Colonic mucosa (tissue), 4 donors: ENCODE measurements at regions of chr2 and their contacts with region 1.

Region 1: GRCh38 chr2:66574701-66575624 is 140.0 kb downstream of the MEIS1 start:
- DNase-seq: peak; percentile 67
- H3K4me3 ChIP-seq: peak overlapping the region; percentile 31
- H3K27ac ChIP-seq: peak overlapping the region; percentile 61
- H3K4me1 ChIP-seq: peaks cover 17% of the 10 kb centered on the region
- H3K27me3 ChIP-seq: peaks cover 57% of the 10 kb centered on the region
- CTCF ChIP-seq: peak; percentile 26

Region 2: DNA sequence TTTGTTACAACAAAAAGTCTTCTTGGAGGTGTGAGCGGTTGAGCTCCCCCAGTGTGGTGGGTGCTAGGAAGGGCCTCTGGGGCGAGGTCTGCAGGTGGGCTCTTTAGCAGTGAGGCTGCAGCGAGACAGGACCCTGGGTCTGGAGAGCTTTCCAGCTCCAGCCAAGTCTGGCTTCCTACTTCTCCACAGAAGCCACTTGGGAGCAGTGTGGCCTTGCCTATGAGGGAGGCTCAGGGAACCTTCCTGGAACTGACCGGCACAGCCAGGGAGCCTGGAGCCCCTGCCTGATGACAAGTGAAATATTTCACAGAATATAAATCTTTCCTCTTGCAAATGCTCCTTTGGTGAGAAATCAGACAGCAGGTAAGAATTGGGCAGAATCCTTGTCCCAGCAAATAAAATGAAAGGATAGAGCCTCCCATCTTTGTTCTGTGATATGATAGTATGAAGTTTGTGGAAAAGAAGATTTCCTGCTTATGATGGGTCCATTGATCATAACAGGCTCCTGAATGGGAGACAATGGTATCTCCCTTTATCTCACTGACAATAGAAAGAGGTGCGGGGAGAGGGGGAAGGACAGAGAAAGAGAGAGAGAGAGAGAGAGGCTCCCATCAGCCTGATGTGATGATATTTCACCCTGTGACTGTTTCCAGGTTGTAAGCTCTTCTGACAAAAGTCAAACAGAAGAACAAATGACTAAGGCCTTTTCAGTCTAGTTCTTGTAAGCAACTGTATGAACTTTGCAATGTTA is 852.8 kb before region 1 on chr2:
- intact Hi-C with region 1: loop called (anchors 10 kb)
- DNase-seq: peak; percentile 20
- H3K4me3 ChIP-seq: no peak overlapping the region
- H3K27ac ChIP-seq: no peak overlapping the region
- H3K4me1 ChIP-seq: no peaks in the 10 kb centered on the region
- H3K27me3 ChIP-seq: no peaks in the 10 kb centered on the region
- CTCF ChIP-seq: no peak